ENCODE measurements at regions of chr6 and their contacts with region 1.

Region 1: DNA sequence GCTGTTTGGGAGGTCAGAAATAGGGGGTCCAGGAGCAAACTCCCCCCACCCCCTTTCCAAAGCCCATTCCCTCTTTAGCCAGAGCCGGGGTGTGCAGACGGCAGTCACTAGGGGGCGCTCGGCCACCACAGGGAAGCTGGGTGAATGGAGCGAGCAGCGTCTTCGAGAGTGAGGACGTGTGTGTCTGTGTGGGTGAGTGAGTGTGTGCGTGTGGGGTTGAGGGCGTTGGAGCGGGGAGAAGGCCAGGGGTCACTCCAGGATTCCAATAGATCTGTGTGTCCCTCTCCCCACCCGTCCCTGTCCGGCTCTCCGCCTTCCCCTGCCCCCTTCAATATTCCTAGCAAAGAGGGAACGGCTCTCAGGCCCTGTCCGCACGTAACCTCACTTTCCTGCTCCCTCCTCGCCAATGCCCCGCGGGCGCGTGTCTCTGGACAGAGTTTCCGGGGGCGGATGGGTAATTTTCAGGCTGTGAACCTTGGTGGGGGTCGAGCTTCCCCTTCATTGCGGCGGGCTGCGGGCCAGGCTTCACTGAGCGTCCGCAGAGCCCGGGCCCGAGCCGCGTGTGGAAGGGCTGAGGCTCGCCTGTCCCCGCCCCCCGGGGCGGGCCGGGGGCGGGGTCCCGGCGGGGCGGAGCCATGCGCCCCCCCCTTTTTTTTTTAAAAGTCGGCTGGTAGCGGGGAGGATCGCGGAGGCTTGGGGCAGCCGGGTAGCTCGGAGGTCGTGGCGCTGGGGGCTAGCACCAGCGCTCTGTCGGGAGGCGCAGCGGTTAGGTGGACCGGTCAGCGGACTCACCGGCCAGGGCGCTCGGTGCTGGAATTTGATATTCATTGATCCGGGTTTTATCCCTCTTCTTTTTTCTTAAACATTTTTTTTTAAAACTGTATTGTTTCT is at the start of gene VEGFA:
- DNase-seq: peak; percentile 88 to 94 (median 93)
- H3K4me3 ChIP-seq: peak within 1 kb of the TSS; percentile 43 to 97 (median 80)
- H3K27ac ChIP-seq: peak within 1 kb of the TSS; percentile 88 to 97 (median 94)
- H3K4me1 ChIP-seq: peaks cover 26 to 29% of the 10 kb centered on the region in 2 donors
- H3K27me3 ChIP-seq: no peaks in the 10 kb centered on the region
- CTCF ChIP-seq: peak; percentile 98 to 100 (median 98)
- POLR2A ChIP-seq: peak; percentile 53 to 83
- total RNA-seq, gene VEGFA: 31.5 to 343 (median 71.0) TPM

Region 2: GRCh38 chr6:43667245-43668150 is 102.3 kb before region 1 on chr6:
- intact Hi-C with region 1: loop called in 1 of 2 experiments (anchors 5 kb)
- DNase-seq: peak; percentile 75 to 94 (median 85)
- H3K4me3 ChIP-seq: no peak overlapping the region
- H3K27ac ChIP-seq: peak overlapping the region in 2 of 5 donors; percentile 42 to 44
- H3K4me1 ChIP-seq: peaks cover 15 to 36% of the 10 kb centered on the region in 2 donors
- H3K27me3 ChIP-seq: no peaks in the 10 kb centered on the region
- CTCF ChIP-seq: peak; percentile 86 to 95 (median 95)
- POLR2A ChIP-seq: no peak

Region 3: DNA sequence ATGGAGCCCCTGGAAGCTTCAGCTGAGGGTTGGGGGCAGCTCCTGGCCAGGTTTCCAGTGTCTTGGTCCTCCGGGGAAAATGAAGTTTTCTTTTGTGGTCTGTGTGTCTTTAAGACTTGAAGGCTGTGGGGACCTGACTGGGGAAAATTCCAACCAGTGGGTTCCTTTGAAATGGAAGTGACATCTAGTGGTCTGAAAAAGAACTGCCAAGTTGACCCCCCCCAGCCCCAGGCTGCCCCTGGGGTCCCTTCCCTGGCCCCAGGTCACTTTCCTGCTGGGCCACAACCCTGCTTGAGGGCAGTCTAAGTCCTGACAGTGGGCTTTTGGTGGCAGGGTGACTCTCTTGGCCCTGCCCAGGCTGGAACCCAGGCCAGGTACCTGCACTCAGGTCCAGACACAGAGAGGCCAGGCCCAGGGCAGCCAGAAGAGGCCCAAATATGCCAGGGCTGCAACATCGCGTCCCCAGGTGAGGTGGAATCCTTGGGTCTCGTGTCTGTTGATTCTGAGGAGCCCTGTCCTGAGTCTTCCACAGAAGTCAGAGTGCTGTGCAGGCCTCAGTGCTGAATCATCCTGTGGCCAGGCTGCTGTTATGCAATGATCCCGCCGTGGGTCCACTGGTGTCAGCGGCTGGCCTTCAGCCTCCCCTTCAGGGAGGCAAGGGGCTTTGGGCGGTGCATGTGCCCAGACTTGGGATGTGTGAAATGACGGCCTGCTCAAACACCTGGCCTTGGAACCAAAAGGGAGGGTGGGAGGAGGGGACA is 68.7 kb after region 1 on chr6:
- intact Hi-C with region 1: loop called in 1 of 2 experiments (anchors 5 kb)
- DNase-seq: peak; percentile 73 to 90 (median 86)
- H3K4me3 ChIP-seq: no peak overlapping the region
- H3K27ac ChIP-seq: peak overlapping the region in 4 of 5 donors; percentile 58 to 89 (median 79)
- H3K4me1 ChIP-seq: peaks cover 9 to 20% of the 10 kb centered on the region in 2 donors
- H3K27me3 ChIP-seq: no peaks in the 10 kb centered on the region
- CTCF ChIP-seq: peak; percentile 39 to 76 (median 62)
- POLR2A ChIP-seq: peak in 1 of 2 donors; percentile 64

Region 4: DNA sequence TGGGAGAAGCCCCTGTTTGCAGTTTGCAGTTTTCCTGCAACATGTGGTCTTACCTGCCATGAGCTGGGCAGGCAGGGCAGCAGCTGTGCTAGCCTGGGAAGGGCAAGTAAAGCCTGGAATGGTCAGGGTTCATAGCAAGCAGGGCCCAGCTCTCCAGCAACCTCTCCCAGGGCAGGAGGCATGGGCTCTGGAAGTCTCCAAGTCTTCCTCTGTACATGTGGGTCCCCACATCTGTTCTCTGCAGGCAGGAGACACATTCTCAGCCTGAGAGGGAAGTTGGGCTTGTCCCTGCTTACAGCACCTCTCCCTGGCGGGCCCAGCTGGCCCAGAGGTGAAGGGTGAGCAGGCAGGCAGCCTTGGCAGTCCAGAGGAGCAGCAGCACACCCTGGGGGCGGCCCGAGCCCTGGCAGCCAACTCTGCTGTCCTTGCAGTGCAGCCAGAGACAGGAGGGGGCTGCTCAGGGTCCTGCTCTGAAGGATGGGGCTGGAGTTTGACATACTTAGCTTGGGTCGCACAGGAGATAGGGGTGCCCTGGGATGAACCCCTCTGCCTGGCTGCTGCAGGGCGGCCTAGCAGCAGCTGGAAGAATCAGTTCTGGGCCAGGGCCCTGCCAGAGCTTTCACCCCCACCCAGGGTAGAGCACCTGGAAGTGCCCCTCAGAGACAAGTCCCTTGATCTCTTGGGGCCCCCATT is 181.4 kb after region 1 on chr6:
- intact Hi-C with region 1: loop called (anchors 5 kb)
- DNase-seq: peak; percentile 73 to 85 (median 81)
- H3K4me3 ChIP-seq: no peak overlapping the region
- H3K27ac ChIP-seq: peak overlapping the region in 2 of 5 donors; percentile 56 to 87
- H3K4me1 ChIP-seq: peaks cover 10 to 24% of the 10 kb centered on the region in 2 donors
- H3K27me3 ChIP-seq: no peaks in the 10 kb centered on the region
- CTCF ChIP-seq: peak; percentile 41 to 78 (median 68)
- POLR2A ChIP-seq: no peak

Region 5: GRCh38 chr6:44074439-44075136 is 304.8 kb after region 1 on chr6:
- intact Hi-C with region 1: loop called (anchors 2 to 5 kb)
- DNase-seq: peak; percentile 68 to 87 (median 78)
- H3K4me3 ChIP-seq: no peak overlapping the region
- H3K27ac ChIP-seq: peak overlapping the region in 1 of 5 donors; percentile 76
- H3K4me1 ChIP-seq: peaks cover 8 to 19% of the 10 kb centered on the region in 2 donors
- H3K27me3 ChIP-seq: no peaks in the 10 kb centered on the region
- CTCF ChIP-seq: peak; percentile 88 to 96 (median 91)
- POLR2A ChIP-seq: no peak